ENCODE measurements at regions of chr13 and their contacts with region 1.

Region 1: DNA sequence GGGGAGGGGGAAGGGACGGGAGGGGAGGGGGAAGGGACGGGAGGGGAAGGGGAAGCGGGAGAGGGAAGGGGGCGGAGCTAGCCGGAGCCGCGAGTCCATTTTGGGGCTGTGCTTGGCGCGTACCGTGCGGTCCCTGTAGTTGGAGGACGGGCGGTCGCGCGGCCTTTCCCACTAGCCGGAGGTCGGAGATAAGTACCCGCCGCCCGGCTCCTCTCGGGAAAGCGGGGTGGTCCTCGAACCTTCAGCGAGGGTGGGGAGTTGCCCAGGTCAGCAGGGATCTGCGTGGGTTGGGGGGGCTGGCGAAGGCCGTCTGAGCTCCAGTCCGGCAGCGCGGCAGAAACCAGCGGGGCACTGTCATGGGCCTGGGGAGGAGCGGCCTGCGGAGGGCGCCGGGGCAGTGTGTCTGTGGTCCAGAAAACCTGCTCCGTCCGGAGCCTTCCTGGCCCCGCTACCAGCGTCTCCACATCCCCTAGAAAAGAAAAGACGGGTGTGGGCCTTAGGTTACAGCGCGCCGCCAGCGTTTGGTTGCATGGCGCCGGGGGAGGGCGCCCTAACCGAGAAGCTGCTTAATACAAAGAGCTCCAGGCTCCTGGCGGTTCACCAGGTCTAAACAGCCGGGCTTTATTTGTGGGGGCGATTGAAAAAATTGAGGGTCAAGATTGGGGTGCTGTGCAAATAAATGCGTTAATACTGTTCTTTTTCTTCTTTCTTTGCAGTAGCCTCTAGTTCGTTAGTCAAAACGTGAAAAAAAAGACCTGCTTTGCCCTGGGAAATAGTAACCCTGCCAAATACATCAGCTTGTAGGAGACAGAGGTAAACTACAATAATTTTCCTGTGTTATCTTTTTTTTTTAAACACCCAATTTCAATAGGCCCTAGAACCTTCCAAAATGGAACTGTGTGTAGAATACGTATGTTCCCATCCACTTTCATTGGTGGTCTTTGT is at the start of gene TRIM13:
- DNase-seq: peak; percentile 92 to 97 (median 96)
- ATAC-seq: peak; percentile 91
- H3K4me3 ChIP-seq: peak within 1 kb of the TSS; percentile 89
- H3K27ac ChIP-seq: peak within 1 kb of the TSS; percentile 97
- H3K4me1 ChIP-seq: no peaks in the 10 kb centered on the region
- H3K27me3 ChIP-seq: no peaks in the 10 kb centered on the region
- total RNA-seq, gene TRIM13: 18.2 to 25.4 (median 21.8) TPM

Region 2: DNA sequence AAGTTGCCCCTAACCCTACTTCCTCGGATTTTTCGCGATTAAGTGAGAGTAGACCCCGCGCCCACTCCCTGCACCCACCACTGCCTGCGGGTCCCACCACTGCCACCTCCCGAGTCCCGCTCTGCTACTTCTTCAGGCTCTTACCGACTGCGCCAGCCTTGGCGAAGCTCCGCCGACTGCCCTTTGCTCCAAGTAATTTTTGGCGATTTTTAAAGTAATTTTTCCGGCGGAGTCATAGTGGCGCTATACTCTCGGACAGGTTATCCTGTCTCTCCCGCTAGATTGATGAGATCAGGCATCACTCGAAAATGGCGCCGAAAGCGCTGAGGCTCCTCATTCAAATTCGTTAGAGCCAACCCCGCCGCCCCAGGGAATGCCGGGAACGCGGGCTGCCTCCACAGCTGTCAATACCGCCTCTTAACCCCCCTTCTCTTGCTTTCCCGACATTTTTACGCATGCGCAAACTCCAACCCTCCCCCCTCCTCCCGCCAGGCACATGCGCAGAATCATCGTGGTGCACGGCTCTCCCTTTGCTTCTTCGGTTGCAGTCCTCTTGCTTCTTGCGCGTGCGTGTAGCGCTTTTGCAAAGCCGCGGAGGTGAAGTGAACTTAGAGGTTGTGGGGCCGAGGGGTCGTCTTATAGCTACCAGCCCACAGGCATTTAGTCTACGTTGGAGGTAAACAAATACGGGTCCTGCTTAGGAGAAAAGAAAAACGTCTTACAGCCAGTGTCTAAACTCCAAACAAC is 84.6 kb after region 1 on chr13:
- intact Hi-C with region 1: loop called in 2 of 4 experiments (anchors 5 kb)
- DNase-seq: peak; percentile 97 to 98 (median 98)
- ATAC-seq: peak; percentile 97
- H3K4me3 ChIP-seq: peak overlapping the region; percentile 89
- H3K27ac ChIP-seq: peak overlapping the region; percentile 54
- H3K4me1 ChIP-seq: no peaks in the 10 kb centered on the region
- H3K27me3 ChIP-seq: no peaks in the 10 kb centered on the region

Measured in right cardiac atrium (tissue), 5 donors.